A549 (cell line): ENCODE measurements at regions of chr1 and their contacts with region 1.

Region 1: DNA sequence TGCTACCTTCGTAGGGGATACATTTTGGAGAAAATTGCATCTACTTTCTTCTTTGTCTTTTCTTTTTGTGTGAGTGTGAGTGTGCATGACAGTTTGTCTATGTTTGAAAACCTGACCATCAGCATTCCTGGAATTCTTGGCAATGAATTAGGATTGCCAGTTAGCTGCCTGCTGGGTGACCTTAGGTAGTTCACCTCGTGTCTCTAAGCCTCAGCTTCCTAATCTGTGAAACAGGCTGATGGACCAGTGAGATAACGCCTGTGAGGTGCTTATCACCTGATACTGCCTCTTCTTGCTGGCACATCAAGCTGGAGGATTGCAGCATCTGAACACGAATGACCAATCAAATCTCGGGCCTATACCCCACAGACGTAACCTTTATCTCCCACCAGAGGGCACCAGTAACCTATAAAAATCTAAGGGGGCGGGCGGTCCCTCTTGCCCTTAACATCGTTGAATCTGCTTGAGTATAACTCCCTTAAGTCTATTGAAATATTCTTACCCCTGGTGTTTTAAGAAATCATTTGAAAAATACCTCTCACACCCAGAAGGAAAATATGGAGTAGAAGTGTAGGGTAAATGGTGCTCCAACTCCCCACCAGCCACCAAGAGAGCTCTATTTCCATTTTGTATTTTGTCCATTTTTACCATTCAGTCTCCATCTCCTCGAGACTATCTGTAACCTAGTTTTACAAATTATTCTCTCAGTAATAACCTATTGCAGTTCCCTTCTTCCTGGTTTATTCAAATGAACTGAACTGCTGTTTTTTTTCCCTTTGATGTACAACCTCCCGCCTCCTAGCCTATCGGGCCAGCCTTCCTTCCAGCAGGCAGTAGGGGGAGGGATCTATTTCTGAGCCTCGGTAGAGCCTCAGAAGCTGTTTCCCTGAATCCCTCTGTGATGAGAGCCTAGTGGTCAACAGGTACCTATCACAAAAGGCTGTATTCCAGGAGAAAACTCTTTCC is 49.7 kb downstream of the MDM4 start:
- DNase-seq: peak; percentile 82 to 89
- ATAC-seq: peak; percentile 79 to 93
- H3K4me3 ChIP-seq: no peak overlapping the region
- H3K27ac ChIP-seq: no peak overlapping the region
- H3K4me1 ChIP-seq: peaks cover 9% of the 10 kb centered on the region; the same call in 2 of the 3 replicates
- CTCF ChIP-seq: peak; percentile 87
- EP300 ChIP-seq: no peak
- POLR2A ChIP-seq: no peak
- RAD21 ChIP-seq: peak; percentile 93 to 95

Region 2: GRCh38 chr1:204544321-204544720 is 21.6 kb before region 1 on chr1:
- CTCF ChIA-PET with region 1: interaction called, 54 read pairs
- POLR2A ChIA-PET with region 1: no interaction called
- DNase-seq: no peak
- ATAC-seq: no peak
- H3K4me3 ChIP-seq: no peak overlapping the region
- H3K27ac ChIP-seq: no peak overlapping the region
- H3K4me1 ChIP-seq: no peaks in the 10 kb centered on the region
- CTCF ChIP-seq: no peak
- EP300 ChIP-seq: no peak
- POLR2A ChIP-seq: no peak
- RAD21 ChIP-seq: no peak

Region 3: GRCh38 chr1:204591594-204592051 is 25.7 kb after region 1 on chr1:
- CTCF ChIA-PET with region 1: interaction called, 13 read pairs
- POLR2A ChIA-PET with region 1: no interaction called
- DNase-seq: no peak
- ATAC-seq: peak; percentile 48 to 74; a peak in 3 of 6 replicates
- H3K4me3 ChIP-seq: no peak overlapping the region
- H3K27ac ChIP-seq: no peak overlapping the region
- H3K4me1 ChIP-seq: peaks cover 15% of the 10 kb centered on the region; the same call in 2 of the 3 replicates
- CTCF ChIP-seq: no peak
- EP300 ChIP-seq: no peak
- POLR2A ChIP-seq: no peak
- RAD21 ChIP-seq: no peak; a peak in 1 of 5 replicates

Region 4: DNA sequence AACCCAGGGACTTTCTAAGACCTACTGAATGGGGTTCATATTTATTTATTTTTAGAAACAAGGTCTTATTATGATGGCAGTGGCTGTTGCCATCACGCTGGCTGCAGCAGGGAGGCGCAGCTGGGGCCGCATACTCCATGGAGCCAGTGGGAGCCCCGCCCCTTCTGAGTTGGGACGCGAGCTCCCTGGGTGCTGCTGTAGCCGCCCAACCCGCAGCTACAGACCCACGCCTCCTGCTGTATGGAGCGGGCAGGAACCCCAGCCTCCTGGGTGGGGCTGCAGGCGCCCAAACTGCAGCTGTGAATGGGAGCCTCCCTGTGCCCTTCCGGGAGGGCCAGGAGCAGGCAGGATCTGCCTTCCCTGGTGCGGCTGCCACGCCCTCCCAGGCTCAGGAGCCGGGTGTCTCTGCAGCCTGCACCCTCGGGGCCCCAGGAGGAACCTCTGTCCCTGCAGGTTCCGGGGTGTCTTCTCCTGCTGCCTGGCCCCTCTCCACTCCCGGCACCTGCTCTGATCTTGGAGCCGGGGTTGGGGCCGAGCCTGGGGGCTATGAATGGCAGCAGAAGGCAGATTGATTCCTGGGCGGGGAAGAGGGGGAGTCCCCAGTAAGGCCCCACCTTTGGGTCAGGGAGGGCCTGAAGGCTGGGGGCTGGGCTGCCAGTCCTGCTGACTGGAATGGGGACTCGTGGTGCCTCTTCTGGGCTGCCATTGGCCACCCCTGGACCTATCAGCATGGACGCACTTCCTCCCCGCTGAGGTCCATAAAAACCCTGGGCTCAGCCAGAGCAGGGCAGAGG is 186.2 kb after region 1 on chr1:
- CTCF ChIA-PET with region 1: interaction called, 16 read pairs
- POLR2A ChIA-PET with region 1: no interaction called
- DNase-seq: peak; percentile 46 to 85
- ATAC-seq: peak; percentile 94 to 100
- H3K4me3 ChIP-seq: peak overlapping the region; percentile 37
- H3K27ac ChIP-seq: peak overlapping the region; percentile 59 to 83
- H3K4me1 ChIP-seq: peaks cover 14% of the 10 kb centered on the region
- CTCF ChIP-seq: peak; percentile 46
- EP300 ChIP-seq: no peak
- POLR2A ChIP-seq: peak; percentile 23; the same call in 1 of the 2 replicates
- RAD21 ChIP-seq: peak; percentile 34 to 57; a peak in 4 of 5 replicates

Region 5: DNA sequence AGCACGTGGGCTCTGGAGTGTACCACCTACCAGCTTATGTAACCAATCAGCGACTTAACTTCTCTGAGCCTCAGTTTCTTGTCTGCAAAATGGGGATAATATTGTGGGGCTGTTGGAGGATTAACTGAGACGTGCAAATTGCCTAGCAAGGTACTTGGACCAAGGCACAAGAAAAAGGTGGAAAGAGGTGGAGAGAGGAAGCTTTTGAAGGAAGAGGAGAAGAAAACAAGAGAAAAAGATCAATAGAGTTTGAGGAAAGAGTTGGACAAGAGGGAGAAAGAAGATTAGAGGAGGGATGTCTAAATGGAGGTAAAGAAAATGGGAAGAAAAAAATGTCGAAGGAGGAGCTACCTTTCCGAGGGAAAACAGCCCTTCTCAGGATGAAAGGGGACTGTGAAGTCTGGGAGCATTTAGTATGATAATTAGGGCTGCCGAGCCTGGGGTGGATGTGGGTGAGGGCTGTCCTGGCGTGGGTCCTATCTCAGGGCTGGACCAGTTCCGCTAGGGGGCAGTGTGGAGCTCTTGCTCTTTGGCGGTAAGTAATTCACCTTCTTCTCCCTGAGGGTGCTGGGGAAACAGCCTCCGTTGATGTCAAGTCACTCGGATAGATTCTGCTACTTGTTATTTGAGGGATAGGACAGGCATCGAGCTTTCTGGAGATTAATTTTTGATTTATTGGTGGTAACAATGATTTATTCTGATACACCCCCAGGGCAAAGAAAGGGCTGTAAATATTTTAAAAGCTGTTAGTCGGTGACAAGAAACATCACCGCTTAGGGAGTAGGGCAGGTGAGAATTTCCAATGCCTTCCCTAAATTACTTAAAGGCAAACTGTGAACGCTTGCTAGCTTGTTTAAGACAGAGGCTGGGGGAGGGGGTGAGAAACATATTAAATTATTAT is 225.8 kb after region 1 on chr1:
- CTCF ChIA-PET with region 1: interaction called, 39 read pairs
- POLR2A ChIA-PET with region 1: no interaction called
- DNase-seq: peak; percentile 75 to 79
- ATAC-seq: peak; percentile 91 to 97
- H3K4me3 ChIP-seq: no peak overlapping the region
- H3K27ac ChIP-seq: no peak overlapping the region
- H3K4me1 ChIP-seq: no peaks in the 10 kb centered on the region
- CTCF ChIP-seq: peak; percentile 84
- EP300 ChIP-seq: no peak
- POLR2A ChIP-seq: no peak
- RAD21 ChIP-seq: peak; percentile 24 to 33; a peak in 2 of 5 replicates

Region 6: DNA sequence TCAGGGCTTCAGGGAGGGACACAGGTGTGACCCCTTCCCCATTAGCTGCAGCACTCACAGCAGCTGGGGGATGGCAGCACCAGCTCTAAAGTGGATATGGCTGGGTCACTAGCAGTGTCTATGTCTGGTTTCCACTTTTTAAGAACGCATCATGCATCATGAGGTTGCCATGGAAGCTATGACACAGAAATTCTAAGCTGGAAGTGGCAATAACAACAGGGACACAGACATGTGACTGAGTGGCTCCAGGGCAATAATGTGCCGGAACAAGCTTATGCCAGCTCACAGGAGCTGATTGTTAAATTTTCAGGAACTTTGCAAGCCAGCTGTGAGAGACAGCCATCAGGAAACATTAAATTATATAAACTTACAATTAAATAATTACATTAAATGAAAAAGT is 253.6 kb after region 1 on chr1:
- CTCF ChIA-PET with region 1: interaction called, 18 read pairs
- POLR2A ChIA-PET with region 1: no interaction called
- DNase-seq: no peak
- ATAC-seq: no peak
- H3K4me3 ChIP-seq: no peak overlapping the region
- H3K27ac ChIP-seq: no peak overlapping the region
- H3K4me1 ChIP-seq: no peaks in the 10 kb centered on the region
- CTCF ChIP-seq: no peak
- EP300 ChIP-seq: no peak
- POLR2A ChIP-seq: no peak
- RAD21 ChIP-seq: no peak